GM13977 (cell line): ENCODE measurements at regions of chr5 and their contacts with region 1.

Region 1: DNA sequence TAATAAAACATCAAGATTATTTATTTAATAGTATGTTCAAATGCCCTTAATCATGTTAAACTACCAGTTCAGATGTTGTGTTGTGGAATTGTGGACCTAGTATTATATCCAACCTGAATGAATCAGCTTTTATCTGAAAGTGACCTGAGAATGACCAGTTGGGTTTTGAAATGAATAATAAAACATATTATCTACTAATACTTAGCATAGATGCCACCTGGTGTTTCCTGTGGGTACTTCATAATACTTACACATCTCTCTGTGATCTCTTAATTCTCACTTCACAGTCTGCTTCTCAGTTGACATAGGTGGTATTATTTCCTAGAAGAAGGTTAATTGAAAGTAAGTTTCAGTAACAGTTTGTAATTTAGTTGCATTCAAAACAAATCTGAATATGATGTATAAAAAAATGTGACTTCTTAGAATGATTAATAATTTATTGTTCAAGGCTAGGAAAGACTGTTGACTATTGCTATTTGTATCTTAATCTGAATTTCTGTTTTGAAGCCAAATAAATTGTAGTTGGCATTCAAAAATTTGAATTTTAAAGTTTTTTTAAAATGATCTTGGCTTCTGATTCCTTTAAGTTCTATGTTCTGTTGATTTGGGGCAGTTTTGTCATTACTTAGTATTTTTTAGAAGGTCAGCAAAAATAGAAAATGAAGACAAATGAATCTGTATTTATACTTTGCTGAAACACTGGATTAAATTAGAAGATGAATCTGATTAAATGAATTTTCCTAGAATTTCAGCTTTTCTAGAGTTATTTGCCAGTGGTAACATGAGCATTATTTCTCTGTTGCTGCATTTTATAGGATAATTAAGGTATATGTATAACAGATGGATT is 48.2 kb downstream of the KIF2A start:
- DNase-seq: peak; percentile 39
- CTCF ChIP-seq: peak; percentile 49

Region 2: DNA sequence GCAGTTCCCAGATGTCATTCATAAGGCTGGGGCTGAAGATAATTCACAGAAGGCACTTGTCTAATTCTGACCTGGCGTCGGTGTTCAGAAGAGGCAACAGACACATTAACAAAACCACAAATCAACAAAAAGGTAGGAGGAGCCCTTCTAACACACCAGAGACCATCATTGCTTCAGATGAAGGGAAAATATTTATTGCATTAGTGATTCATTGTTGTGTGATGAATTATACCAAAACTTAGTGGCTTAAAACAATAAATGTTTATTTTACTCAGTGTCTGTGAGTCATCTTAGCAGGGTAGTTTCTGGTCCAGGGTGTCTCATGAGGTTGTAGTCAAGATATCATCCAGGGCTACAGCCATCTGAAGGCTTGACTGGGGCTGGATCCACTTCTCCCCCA is 139.6 kb before region 1 on chr5:
- in situ Hi-C with region 1: loop called (anchors 10 kb)
- DNase-seq: no peak
- CTCF ChIP-seq: no peak

Region 3: DNA sequence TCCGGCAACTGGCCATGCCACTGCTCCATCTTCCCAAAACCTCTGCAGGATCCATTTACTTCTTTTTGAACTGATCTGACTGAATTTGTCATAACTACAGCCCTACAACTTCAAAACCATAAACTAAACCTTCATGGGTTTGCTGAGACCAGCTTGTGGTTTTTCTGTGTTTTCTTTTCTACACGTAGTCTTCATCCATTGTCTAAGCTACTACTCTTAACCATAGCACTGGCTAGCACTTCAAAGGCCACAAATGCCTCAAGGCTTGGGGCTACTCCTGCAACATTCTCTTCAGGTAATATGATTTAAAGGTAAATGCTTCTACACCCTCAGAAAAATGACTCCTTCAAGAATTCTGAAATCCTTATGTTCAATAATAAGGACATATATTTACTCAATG is 57.2 kb before region 1 on chr5:
- in situ Hi-C with region 1: no loop called
- DNase-seq: no peak
- CTCF ChIP-seq: no peak

Region 4: DNA sequence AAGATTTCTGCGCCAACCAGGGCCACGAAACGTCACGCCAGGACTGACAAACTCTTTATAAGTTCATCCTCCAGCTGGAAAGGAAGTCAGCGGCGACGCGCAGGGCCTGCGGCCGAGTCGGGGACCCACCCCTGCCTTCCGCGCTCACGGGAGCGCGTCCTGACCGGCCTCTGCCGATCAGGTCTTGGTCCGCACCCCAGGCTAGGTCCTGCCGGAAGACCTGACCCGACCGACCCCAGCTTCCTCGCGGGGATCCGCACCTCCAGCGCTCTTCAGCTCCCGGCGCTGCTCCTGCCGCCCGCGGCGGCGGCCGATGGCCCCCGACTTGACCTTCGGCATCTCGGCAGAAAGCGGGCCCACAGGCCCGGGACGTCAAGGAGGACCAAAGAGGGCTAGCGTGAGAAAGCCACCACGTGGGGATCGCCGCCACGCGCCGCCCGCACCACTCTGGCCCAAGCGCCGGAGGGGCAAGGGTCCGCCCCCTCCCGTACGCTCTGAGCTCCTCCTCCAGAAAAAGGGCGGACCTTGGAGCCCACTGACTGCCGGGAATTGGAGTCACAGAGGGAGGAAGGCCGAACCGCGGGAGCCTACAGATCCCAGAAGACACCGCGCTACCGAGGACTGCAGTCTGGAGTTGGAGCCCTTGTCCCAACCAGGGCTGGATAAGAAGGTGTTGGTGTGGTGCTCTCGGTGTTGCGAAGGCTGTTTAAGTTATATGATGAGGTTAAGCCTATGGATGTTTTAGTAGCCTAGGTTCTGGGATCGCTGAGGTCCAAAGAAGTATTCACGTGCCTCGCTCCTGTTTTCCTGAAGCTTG is 49.4 kb after region 1 on chr5 and contains the start of gene DIMT1:
- in situ Hi-C with region 1: no loop called
- DNase-seq: peak; percentile 96
- CTCF ChIP-seq: no peak